ENCODE measurements at regions of chr12 and their contacts with region 1.

Region 1: DNA sequence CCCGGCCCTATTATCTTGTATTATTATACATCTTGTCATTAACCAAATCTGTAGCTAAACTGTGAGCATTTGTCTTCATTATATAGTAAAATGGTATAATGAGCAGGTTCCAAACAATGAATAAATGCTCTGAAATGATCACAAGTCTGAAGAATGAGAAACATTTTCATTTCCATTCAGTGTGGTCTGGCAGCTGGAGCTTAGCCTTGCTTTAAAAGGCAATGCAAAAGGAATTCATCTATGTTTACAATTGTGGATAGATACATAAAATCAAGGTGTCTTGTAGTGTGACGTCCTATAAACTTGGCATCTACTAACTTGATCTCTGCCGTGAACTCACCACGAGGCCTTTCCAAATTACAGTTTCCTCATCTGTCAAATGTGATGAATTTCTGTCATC is 168.3 kb downstream of the RMST start:
- DNase-seq: no peak
- H3K4me3 Mint-ChIP-seq: no peak overlapping the region
- H3K27ac Mint-ChIP-seq: no peak overlapping the region
- H3K4me1 Mint-ChIP-seq: no peaks in the 10 kb centered on the region
- H3K27me3 Mint-ChIP-seq: no peaks in the 10 kb centered on the region

Region 2: DNA sequence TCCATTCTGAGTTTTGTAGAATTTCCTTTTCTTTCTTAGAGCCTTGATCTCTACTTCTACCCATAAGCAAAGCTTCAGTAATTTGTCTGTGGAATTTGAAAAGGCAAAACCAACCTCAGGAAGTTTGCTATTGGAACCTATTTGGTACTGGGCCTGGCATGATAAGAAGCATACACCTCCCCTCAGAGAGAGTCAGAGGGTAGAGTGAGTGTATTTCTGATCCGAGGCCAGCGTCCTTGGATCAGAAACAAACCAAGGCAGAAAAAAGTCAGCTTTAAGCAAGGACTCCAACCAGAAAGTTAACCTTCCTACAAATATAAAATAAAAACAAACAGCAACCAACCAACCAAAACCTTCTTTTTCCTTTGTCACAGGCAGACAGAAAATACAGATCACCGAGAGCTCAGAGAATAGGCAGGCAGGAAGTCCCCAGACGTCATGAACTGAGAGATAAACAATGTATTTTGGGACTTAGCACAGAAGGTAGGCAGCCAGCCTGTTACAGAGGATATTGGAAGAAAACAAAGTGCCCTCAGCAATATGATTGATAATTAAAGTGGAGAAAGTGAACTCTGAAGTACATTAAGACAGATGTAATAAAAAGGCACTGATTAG is 582.3 kb before region 1 on chr12:
- CTCF ChIA-PET with region 1: no interaction called
- intact Hi-C with region 1: no loop called
- DNase-seq: no peak
- H3K4me3 Mint-ChIP-seq: no peak overlapping the region
- H3K27ac Mint-ChIP-seq: no peak overlapping the region
- H3K4me1 Mint-ChIP-seq: no peaks in the 10 kb centered on the region
- H3K27me3 Mint-ChIP-seq: peaks cover 3% of the 10 kb centered on the region

Region 3: GRCh38 chr12:97167598-97167997 is 463.3 kb before region 1 on chr12:
- CTCF ChIA-PET with region 1: no interaction called
- intact Hi-C with region 1: loop called (anchors 5 kb)
- DNase-seq: no peak
- H3K4me3 Mint-ChIP-seq: no peak overlapping the region
- H3K27ac Mint-ChIP-seq: no peak overlapping the region
- H3K4me1 Mint-ChIP-seq: no peaks in the 10 kb centered on the region
- H3K27me3 Mint-ChIP-seq: peaks cover 15% of the 10 kb centered on the region

Measured in activated naive CD4-positive, alpha-beta T cell treated with anti-CD3 and anti-CD28 coated beads for 36 hours (primary cell).